ENCODE measurements at regions of chr16 and their contacts with region 1.

Region 1: DNA sequence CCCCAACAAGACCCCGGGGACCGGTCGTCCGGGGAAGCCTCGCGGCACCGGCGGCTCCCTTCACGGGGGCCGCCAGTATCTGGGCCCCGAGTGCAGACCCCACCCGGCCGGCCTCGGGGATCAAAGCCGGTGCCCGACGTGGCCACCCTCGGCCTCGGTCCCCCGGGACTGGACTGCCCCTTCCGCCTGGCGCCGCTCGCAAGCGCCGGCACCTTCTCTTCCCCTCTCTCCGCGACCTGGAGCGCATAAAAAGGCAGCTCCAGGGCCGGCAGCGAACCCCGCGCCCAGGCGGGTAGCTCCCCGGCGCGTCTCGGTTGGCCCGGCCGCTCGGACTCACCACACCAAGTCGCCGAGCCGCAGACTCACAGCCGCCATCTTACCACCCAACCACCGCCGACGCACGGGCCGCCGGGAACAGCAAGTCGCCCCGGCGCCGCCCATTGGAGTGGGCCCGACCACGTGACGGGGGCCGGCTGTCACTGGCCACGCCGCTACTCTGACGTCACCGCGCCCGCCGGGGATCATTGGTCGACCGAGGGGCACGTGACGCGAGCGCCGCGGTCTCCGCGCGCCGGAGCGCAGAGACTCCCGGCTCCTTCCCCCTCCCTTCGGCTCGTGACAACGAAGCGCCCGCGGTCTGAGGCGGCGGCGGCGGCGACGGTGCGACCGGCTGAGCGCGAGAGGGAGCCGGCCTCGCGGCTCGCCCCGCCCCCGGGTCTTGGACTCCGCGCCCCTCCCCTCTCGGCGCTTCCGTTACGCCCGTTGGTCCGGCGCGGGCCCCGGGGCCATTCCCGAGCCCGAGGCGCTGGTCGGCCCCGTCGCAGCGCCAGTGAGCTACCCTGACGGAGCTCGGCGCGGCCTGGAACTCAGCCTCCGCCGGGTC is at the starts of genes GLYR1 and UBN1:
- DNase-seq: peak; percentile 99
- ATAC-seq: peak; percentile 86
- H3K4me3 ChIP-seq: peak within 1 kb of the TSS; percentile 69 to 96 (median 87)
- H3K4me3 Mint-ChIP-seq: peak within 1 kb of the TSS; percentile 93
- H3K27ac ChIP-seq: peak within 1 kb of the TSS; percentile 80 to 97
- H3K27ac Mint-ChIP-seq: peak within 1 kb of the TSS; percentile 96
- H3K4me1 ChIP-seq: peaks cover 27 to 31% of the 10 kb centered on the region in 2 donors
- H3K4me1 Mint-ChIP-seq: peaks cover 34% of the 10 kb centered on the region
- H3K27me3 ChIP-seq: no peaks in the 10 kb centered on the region
- H3K27me3 Mint-ChIP-seq: no peaks in the 10 kb centered on the region
- CTCF ChIP-seq: no peak
- total RNA-seq, gene GLYR1: 137 and 147 TPM in 2 replicates
- total RNA-seq, gene UBN1: 38.1 and 41.9 TPM in 2 replicates

Region 2: DNA sequence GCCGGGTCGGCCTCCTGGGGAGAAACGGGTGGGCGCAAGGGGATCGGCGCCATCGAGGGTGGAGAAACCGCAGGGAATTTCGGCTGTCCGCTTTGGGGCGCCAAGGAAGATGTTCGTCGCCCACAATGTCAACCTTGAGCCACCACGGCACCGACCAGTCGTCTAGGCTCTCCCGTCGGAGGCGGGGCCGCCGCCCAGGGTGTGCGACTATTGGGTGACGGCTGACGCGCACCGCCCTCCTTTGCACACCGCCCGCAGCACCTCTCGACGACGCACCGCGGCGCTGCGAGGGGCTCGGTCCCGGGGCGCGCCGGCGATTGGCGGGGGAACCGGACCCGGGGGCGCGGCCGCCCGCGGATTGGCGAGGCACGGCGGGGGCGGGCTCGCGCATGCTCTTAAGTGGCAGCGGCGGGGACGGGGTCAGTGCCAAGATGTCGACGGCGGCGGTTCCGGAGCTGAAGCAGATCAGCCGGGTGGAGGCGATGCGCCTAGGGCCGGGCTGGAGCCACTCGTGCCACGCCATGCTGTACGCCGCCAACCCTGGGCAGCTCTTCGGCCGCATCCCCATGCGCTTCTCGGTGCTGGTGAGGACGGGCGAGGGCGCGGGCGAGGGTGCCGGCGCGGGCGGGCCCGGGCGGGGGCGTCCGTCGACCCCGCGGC is 153.7 kb before region 1 on chr16 and contains the start of gene NUDT16L1:
- CTCF ChIA-PET with region 1: no interaction called
- POLR2A ChIA-PET with region 1: no interaction called
- intact Hi-C with region 1: loop called (anchors 1 kb)
- DNase-seq: peak; percentile 97
- ATAC-seq: peak; percentile 95
- H3K4me3 ChIP-seq: peak within 1 kb of the TSS; percentile 50 to 85 (median 81)
- H3K4me3 Mint-ChIP-seq: peak within 1 kb of the TSS; percentile 91
- H3K27ac ChIP-seq: peak within 1 kb of the TSS; percentile 34 to 87
- H3K27ac Mint-ChIP-seq: peak within 1 kb of the TSS; percentile 90
- H3K4me1 ChIP-seq: peaks cover 15 to 19% of the 10 kb centered on the region in 2 donors
- H3K4me1 Mint-ChIP-seq: peaks cover 22% of the 10 kb centered on the region
- H3K27me3 ChIP-seq: no peaks in the 10 kb centered on the region
- H3K27me3 Mint-ChIP-seq: no peaks in the 10 kb centered on the region
- CTCF ChIP-seq: no peak
- total RNA-seq, gene NUDT16L1: 38.5 and 43.2 TPM in 2 replicates

Region 3: GRCh38 chr16:4734063-4734729 is 112.9 kb before region 1 on chr16 and contains the starts of genes ANKS3 and DNAAF8:
- CTCF ChIA-PET with region 1: no interaction called
- POLR2A ChIA-PET with region 1: no interaction called
- intact Hi-C with region 1: no loop called
- DNase-seq: peak; percentile 89
- ATAC-seq: peak; percentile 80
- H3K4me3 ChIP-seq: peak within 1 kb of the TSS; percentile 79 to 98 (median 91)
- H3K4me3 Mint-ChIP-seq: peak within 1 kb of the TSS; percentile 90
- H3K27ac ChIP-seq: peak within 1 kb of the TSS; percentile 35 to 89
- H3K27ac Mint-ChIP-seq: peak within 1 kb of the TSS; percentile 89
- H3K4me1 ChIP-seq: peaks cover 10 to 13% of the 10 kb centered on the region in 2 donors
- H3K4me1 Mint-ChIP-seq: peaks cover 17% of the 10 kb centered on the region
- H3K27me3 ChIP-seq: no peaks in the 10 kb centered on the region
- H3K27me3 Mint-ChIP-seq: no peaks in the 10 kb centered on the region
- CTCF ChIP-seq: no peak
- total RNA-seq, gene ANKS3: 31.9 and 36.2 TPM in 2 replicates
- total RNA-seq, gene DNAAF8: 0.19 and 0.44 TPM in 2 replicates

Region 4: GRCh38 chr16:4766874-4767628 is 80.1 kb before region 1 on chr16 and contains the start of gene ZNF500:
- CTCF ChIA-PET with region 1: no interaction called
- POLR2A ChIA-PET with region 1: no interaction called
- intact Hi-C with region 1: loop called (anchors 1 kb)
- DNase-seq: peak; percentile 95
- ATAC-seq: peak; percentile 91
- H3K4me3 ChIP-seq: peak within 1 kb of the TSS; percentile 69 to 94 (median 87)
- H3K4me3 Mint-ChIP-seq: peak within 1 kb of the TSS; percentile 98
- H3K27ac ChIP-seq: peak within 1 kb of the TSS in 1 of 2 donors; percentile 80
- H3K27ac Mint-ChIP-seq: peak within 1 kb of the TSS; percentile 95
- H3K4me1 ChIP-seq: peaks cover 15 to 33% of the 10 kb centered on the region in 2 donors
- H3K4me1 Mint-ChIP-seq: peaks cover 31% of the 10 kb centered on the region
- H3K27me3 ChIP-seq: no peaks in the 10 kb centered on the region
- H3K27me3 Mint-ChIP-seq: no peaks in the 10 kb centered on the region
- CTCF ChIP-seq: no peak
- total RNA-seq, gene ZNF500: 26.5 and 35.7 TPM in 2 replicates

Region 5: GRCh38 chr16:5033256-5034169 is 186.4 kb after region 1 on chr16 and contains the start of gene NAGPA:
- CTCF ChIA-PET with region 1: no interaction called
- POLR2A ChIA-PET with region 1: no interaction called
- intact Hi-C with region 1: loop called (anchors 1 kb)
- DNase-seq: peak; percentile 91
- ATAC-seq: peak; percentile 85
- H3K4me3 ChIP-seq: peak within 1 kb of the TSS; percentile 66 to 82 (median 75)
- H3K4me3 Mint-ChIP-seq: peak within 1 kb of the TSS; percentile 93
- H3K27ac ChIP-seq: peak within 1 kb of the TSS; percentile 73 to 79
- H3K27ac Mint-ChIP-seq: peak within 1 kb of the TSS; percentile 95
- H3K4me1 ChIP-seq: peaks cover 14 to 17% of the 10 kb centered on the region in 2 donors
- H3K4me1 Mint-ChIP-seq: peaks cover 20% of the 10 kb centered on the region
- H3K27me3 ChIP-seq: no peaks in the 10 kb centered on the region
- H3K27me3 Mint-ChIP-seq: no peaks in the 10 kb centered on the region
- CTCF ChIP-seq: no peak
- total RNA-seq, gene NAGPA: 38.4 and 43.3 TPM in 2 replicates

Measured in B cell (primary cell).